ENCODE measurements at regions of chr6 and their contacts with region 1.

Region 1: GRCh38 chr6:4055420-4056041 is 23.4 kb downstream of the FAM217A start:
- DNase-seq: peak; percentile 46 to 67 (median 66)
- H3K4me3 ChIP-seq: no peak overlapping the region
- H3K27ac ChIP-seq: no peak overlapping the region
- H3K4me1 ChIP-seq: peaks cover 7 to 23% (median 14%) of the 10 kb centered on the region in 4 experiments
- H3K27me3 ChIP-seq: no peaks in the 10 kb centered on the region

Region 2: GRCh38 chr6:4041480-4041879 is 14.1 kb before region 1 on chr6:
- CTCF ChIA-PET with region 1: interaction called, 13 read pairs
- POLR2A ChIA-PET with region 1: no interaction called
- DNase-seq: no peak
- H3K4me3 ChIP-seq: no peak overlapping the region
- H3K27ac ChIP-seq: no peak overlapping the region
- H3K4me1 ChIP-seq: no peaks in the 10 kb centered on the region
- H3K27me3 ChIP-seq: no peaks in the 10 kb centered on the region

Region 3: DNA sequence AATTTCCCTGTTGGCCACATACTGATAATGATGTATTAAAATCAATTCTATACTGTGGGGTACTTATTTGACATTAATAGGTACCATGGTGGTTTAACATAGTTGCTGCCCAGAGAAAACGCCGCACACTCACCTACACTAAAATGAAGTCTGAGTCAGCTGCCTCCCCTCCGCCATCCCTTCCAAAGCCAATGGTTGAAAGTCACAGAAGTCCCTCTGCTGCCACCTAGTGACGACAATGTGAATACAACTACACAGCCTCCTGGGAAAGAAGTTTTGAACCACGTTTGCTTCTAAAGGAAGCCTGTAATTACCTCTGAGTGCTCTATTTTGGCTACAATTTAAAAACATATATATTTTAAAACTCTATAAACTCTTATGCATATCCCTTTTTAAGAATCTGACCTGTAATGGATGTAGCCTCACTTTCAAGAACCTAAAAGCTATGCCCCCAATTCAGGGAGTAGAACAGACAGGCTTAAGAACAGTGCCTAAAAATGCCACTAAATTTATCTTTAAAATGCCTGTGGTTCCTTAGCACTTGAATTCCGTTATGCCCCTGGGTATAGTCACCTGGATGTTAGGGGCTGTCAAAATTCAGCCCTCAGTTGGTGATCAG is 100.4 kb after region 1 on chr6:
- CTCF ChIA-PET with region 1: interaction called, 17 read pairs
- POLR2A ChIA-PET with region 1: no interaction called
- DNase-seq: peak; percentile 83 to 92 (median 88)
- H3K4me3 ChIP-seq: peak overlapping the region in 2 of 7 experiments; percentile 30 to 40
- H3K27ac ChIP-seq: no peak overlapping the region
- H3K4me1 ChIP-seq: peaks cover 0 to 5% (median 3%) of the 10 kb centered on the region in 4 experiments
- H3K27me3 ChIP-seq: no peaks in the 10 kb centered on the region

Region 4: DNA sequence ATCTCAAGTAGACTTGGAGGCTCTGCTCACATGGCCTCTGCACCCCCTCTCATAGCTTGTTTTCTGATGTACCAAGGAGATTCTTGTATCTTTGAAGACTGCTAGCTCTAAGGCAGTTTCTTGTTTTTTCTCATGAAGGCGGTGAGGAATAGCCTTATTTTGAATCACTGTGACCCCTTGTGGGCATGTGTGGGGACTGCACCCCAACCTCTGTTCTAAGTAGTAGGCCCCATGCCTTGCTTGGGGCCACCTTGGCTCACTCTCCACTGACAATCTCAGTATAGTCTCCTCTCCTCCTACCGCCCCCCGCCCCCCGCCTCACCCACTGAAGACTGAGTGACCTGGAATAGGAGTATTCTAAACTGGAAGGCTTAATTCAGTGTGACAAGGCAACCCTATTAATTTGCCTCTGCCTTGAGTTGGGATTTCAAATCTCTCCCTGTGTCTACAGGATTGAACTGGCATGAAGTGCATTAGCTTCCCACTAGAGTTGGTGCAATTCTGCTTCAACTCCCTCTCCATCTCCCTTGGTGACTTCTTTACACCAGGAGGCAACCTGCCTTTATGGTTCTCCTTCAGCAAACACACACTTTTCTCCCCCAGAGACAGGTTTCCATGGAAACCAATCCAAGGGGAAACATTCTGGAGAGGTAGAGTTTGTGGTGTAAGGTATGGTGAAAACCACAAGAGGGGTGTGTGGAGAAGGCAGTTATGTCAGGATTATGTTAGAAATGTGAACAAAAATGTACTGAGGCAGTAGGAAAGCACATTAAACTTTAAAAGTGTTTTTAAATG is 155.3 kb after region 1 on chr6:
- CTCF ChIA-PET with region 1: interaction called, 10 read pairs
- POLR2A ChIA-PET with region 1: no interaction called
- DNase-seq: peak; percentile 41 to 66 (median 62)
- H3K4me3 ChIP-seq: no peak overlapping the region
- H3K27ac ChIP-seq: no peak overlapping the region
- H3K4me1 ChIP-seq: peaks cover 0 to 6% (median 2%) of the 10 kb centered on the region in 4 experiments
- H3K27me3 ChIP-seq: no peaks in the 10 kb centered on the region